Uterus (tissue), 4 donors: ENCODE measurements at regions of chr5 and their contacts with region 1.

Region 1: GRCh38 chr5:149636851-149637246 is 55.6 kb downstream of the ARHGEF37 start:
- DNase-seq: no peak
- H3K4me3 ChIP-seq: no peak overlapping the region
- H3K27ac ChIP-seq: no peak overlapping the region
- H3K4me1 ChIP-seq: no peaks in the 10 kb centered on the region
- H3K27me3 ChIP-seq: no peaks in the 10 kb centered on the region
- CTCF ChIP-seq: peak; percentile 57 to 87 (median 80)
- POLR2A ChIP-seq: no peak

Region 2: DNA sequence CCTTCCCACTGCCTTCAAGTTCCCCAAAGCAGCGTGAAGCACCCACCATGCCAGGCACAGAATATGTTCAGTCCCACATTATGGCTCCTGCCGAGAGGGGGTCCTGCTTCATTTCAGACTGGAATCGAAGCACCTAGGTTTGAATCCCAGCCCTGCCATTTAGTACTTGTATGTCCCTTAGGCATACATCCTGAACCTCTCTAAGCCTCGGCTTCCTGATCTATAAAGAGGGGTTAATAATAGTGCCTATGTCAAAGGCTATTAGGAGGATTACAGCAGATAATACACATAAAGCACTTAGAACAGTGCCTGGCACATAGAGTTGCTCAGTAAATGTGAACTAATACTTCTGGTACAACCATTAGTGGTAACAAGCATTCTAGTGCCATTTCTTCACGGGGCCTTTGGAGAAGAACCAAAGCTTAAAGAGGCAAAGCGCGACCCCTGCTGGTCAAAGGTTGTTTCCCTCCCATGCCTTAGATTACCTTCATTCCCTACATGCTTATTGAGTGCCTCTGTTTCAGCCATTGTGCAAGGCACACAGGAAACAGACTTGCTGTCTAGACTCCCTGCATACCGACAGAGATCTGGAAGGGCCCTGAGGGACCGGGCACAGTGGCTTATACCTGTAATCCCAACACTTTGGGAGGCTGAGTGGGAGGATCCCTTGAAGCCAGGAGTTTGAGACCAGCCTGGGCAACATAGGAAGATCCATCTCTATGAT is 191.5 kb after region 1 on chr5:
- intact Hi-C with region 1: loop called (anchors 2 kb)
- DNase-seq: peak; percentile 87 to 90
- H3K4me3 ChIP-seq: no peak overlapping the region
- H3K27ac ChIP-seq: peak overlapping the region; percentile 78 to 89
- H3K4me1 ChIP-seq: peaks cover 0 to 13% of the 10 kb centered on the region in 2 donors
- H3K27me3 ChIP-seq: no peaks in the 10 kb centered on the region
- CTCF ChIP-seq: peak; percentile 84 to 92 (median 90)
- POLR2A ChIP-seq: no peak

Region 3: GRCh38 chr5:149990518-149991376 is 353.9 kb after region 1 on chr5:
- intact Hi-C with region 1: loop called (anchors 10 kb)
- DNase-seq: peak; percentile 62 to 72
- H3K4me3 ChIP-seq: no peak overlapping the region
- H3K27ac ChIP-seq: no peak overlapping the region
- H3K4me1 ChIP-seq: no peaks in the 10 kb centered on the region
- H3K27me3 ChIP-seq: no peaks in the 10 kb centered on the region
- CTCF ChIP-seq: peak; percentile 85 to 89 (median 88)
- POLR2A ChIP-seq: no peak